Transverse colon (tissue), 4 donors: ENCODE measurements at regions of chrX and their contacts with region 1.

Region 1: DNA sequence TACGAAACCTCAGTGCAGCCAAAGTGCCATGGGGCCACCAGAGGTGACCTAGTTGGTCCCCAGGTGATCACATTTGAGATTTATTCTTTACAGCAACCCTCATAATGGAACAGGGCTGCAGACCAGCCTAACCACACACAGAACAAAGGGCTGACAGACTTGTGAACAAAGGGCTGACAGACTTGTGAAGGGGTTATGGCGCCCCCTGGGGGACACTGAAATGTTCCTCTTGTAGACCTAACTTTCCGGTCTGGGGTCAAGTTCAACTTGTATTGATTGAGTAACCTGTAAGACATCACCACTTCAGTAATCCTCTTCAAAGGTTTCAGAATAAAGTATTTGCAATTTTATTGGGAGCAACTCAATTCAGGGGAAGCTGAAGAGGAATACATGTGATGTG is 175.9 kb upstream of the RPS6KA3 start:
- DNase-seq: peak; percentile 90
- H3K4me3 ChIP-seq: no peak overlapping the region
- H3K27ac ChIP-seq: peak overlapping the region in 3 of 4 donors; percentile 26 to 50 (median 32)
- H3K4me1 ChIP-seq: peaks cover 0 to 17% (median 4%) of the 10 kb centered on the region in 4 donors
- H3K27me3 ChIP-seq: no peaks in the 10 kb centered on the region
- CTCF ChIP-seq: peak; percentile 60 to 69 (median 64)
- EP300 ChIP-seq: no peak
- POLR2A ChIP-seq: no peak

Region 2: GRCh38 chrX:20244931-20245330 is 197.7 kb before region 1 on chrX:
- in situ Hi-C with region 1: loop called (anchors 10 to 25 kb)
- intact Hi-C with region 1: loop called (anchors 5 kb)
- DNase-seq: no peak
- H3K4me3 ChIP-seq: no peak overlapping the region
- H3K27ac ChIP-seq: no peak overlapping the region
- H3K4me1 ChIP-seq: peaks cover 0 to 6% (median 0%) of the 10 kb centered on the region in 4 donors
- H3K27me3 ChIP-seq: no peaks in the 10 kb centered on the region
- CTCF ChIP-seq: no peak
- EP300 ChIP-seq: no peak
- POLR2A ChIP-seq: no peak

Region 3: GRCh38 chrX:20252381-20253231 is 190.0 kb before region 1 on chrX:
- in situ Hi-C with region 1: loop called (anchors 10 to 25 kb)
- intact Hi-C with region 1: loop called (anchors 5 kb)
- DNase-seq: peak; percentile 81
- H3K4me3 ChIP-seq: no peak overlapping the region
- H3K27ac ChIP-seq: peak overlapping the region; percentile 36 to 62 (median 55)
- H3K4me1 ChIP-seq: peaks cover 5 to 20% (median 7%) of the 10 kb centered on the region in 4 donors
- H3K27me3 ChIP-seq: no peaks in the 10 kb centered on the region
- CTCF ChIP-seq: peak; percentile 46 to 65 (median 56)
- EP300 ChIP-seq: no peak
- POLR2A ChIP-seq: no peak

Region 4: GRCh38 chrX:20266810-20267606 is 175.6 kb before region 1 on chrX and contains the start of gene RPS6KA3:
- in situ Hi-C with region 1: loop called in 1 of 4 experiments (anchors 25 kb)
- intact Hi-C with region 1: no loop called
- DNase-seq: peak; percentile 94
- H3K4me3 ChIP-seq: peak within 1 kb of the TSS; percentile 60 to 80 (median 68)
- H3K27ac ChIP-seq: peak within 1 kb of the TSS; percentile 88 to 94 (median 92)
- H3K4me1 ChIP-seq: peaks cover 0 to 26% (median 5%) of the 10 kb centered on the region in 4 donors
- H3K27me3 ChIP-seq: no peaks in the 10 kb centered on the region
- CTCF ChIP-seq: no peak
- EP300 ChIP-seq: no peak
- POLR2A ChIP-seq: peak; percentile 78
- total RNA-seq, gene RPS6KA3: 28.7 to 73.0 (median 49.8) TPM